ENCODE measurements at regions of chr22 and their contacts with region 1.

Region 1: GRCh38 chr22:41697126-41697775 is 2.1 kb upstream of the MEI1 start:
- H3K4me3 ChIP-seq: no peak overlapping the region
- H3K27ac ChIP-seq: no peak overlapping the region
- H3K4me1 ChIP-seq: no peaks in the 10 kb centered on the region
- CTCF ChIP-seq: peak; percentile 94

Region 2: GRCh38 chr22:41589391-41590241 is 107.6 kb before region 1 on chr22 and contains the start of gene PMM1:
- CTCF ChIA-PET with region 1: no interaction called
- POLR2A ChIA-PET with region 1: no interaction called
- H3K4me3 ChIP-seq: peak within 1 kb of the TSS; percentile 90
- H3K27ac ChIP-seq: peak within 1 kb of the TSS; percentile 61
- H3K4me1 ChIP-seq: peaks cover 12% of the 10 kb centered on the region
- CTCF ChIP-seq: peak; percentile 81; the same call in 1 of the 2 replicates

Region 3: DNA sequence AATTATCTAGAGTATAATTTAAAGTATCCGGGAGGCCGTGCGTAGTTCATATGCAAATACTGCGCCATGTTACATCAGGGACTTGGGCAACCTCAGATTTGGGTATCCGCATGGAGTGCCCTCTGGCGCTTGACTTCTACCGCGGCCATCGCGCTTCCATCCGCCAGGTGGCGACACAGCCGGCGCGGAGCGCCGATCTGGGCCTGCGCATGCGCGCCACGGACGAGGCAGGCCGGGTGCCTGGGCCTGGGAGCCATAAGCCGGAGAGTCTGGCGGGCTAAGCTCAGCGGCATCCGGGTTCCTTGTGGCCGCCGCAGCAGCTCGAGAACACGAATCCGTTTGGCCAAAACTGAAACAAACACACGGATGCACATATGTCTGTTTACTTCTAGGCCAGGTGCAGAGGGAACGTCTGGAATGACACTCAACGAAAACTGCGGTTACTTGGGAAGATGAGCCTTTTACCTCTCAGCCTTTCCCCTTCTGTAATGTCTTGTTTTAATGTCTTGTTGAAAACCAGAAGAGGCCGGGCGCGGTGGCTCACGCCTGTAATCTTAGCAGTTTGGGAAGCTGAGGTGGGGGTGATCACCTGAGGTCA is 30.5 kb before region 1 on chr22:
- CTCF ChIA-PET with region 1: interaction called, 12 read pairs
- POLR2A ChIA-PET with region 1: interaction called, 5 read pairs
- H3K4me3 ChIP-seq: peak overlapping the region; percentile 42
- H3K27ac ChIP-seq: peak overlapping the region; percentile 99
- H3K4me1 ChIP-seq: no peaks in the 10 kb centered on the region
- CTCF ChIP-seq: peak; percentile 100

Region 4: GRCh38 chr22:41732096-41732772 is 35.0 kb after region 1 on chr22:
- CTCF ChIA-PET with region 1: interaction called, 18 read pairs
- POLR2A ChIA-PET with region 1: no interaction called
- H3K4me3 ChIP-seq: no peak overlapping the region
- H3K27ac ChIP-seq: no peak overlapping the region
- H3K4me1 ChIP-seq: no peaks in the 10 kb centered on the region; the same call in 1 of the 2 replicates
- CTCF ChIP-seq: no peak

Region 5: GRCh38 chr22:41768430-41768829 is 71.2 kb after region 1 on chr22:
- CTCF ChIA-PET with region 1: interaction called, 22 read pairs
- POLR2A ChIA-PET with region 1: interaction called, 3 read pairs
- H3K4me3 ChIP-seq: no peak overlapping the region
- H3K27ac ChIP-seq: no peak overlapping the region
- H3K4me1 ChIP-seq: no peaks in the 10 kb centered on the region
- CTCF ChIP-seq: no peak

Region 6: GRCh38 chr22:41822317-41823060 is 125.2 kb after region 1 on chr22:
- CTCF ChIA-PET with region 1: interaction called, 11 read pairs
- POLR2A ChIA-PET with region 1: no interaction called
- H3K4me3 ChIP-seq: no peak overlapping the region
- H3K27ac ChIP-seq: no peak overlapping the region
- H3K4me1 ChIP-seq: no peaks in the 10 kb centered on the region
- CTCF ChIP-seq: peak; percentile 55; the same call in 1 of the 2 replicates

Region 7: DNA sequence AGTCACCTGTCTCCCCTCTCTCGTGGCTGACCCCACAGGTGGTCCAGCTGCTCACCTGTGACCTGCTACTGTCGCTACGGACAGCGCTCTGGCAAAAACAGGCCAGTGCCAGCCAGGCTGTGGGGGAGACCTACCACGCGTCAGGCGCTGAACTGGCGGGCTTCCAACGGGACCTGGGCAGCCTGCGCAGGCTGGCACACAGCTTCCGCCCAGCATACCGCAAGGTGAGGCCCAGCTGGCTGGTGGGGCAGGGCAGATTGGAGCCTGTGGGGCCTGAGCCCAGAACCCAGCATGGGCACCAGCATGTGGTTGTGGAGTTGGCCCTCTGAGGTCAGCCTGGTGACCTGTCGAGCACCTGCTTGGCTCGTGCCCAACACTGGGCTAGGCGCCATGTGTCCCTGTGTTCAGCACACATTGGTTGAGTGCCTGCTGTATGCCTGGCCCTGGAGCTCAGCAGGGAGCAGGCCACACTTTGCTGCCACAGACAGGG is 205.7 kb after region 1 on chr22:
- CTCF ChIA-PET with region 1: interaction called, 13 read pairs
- POLR2A ChIA-PET with region 1: no interaction called
- H3K4me3 ChIP-seq: no peak overlapping the region
- H3K27ac ChIP-seq: no peak overlapping the region
- H3K4me1 ChIP-seq: no peaks in the 10 kb centered on the region
- CTCF ChIP-seq: no peak

Region 8: DNA sequence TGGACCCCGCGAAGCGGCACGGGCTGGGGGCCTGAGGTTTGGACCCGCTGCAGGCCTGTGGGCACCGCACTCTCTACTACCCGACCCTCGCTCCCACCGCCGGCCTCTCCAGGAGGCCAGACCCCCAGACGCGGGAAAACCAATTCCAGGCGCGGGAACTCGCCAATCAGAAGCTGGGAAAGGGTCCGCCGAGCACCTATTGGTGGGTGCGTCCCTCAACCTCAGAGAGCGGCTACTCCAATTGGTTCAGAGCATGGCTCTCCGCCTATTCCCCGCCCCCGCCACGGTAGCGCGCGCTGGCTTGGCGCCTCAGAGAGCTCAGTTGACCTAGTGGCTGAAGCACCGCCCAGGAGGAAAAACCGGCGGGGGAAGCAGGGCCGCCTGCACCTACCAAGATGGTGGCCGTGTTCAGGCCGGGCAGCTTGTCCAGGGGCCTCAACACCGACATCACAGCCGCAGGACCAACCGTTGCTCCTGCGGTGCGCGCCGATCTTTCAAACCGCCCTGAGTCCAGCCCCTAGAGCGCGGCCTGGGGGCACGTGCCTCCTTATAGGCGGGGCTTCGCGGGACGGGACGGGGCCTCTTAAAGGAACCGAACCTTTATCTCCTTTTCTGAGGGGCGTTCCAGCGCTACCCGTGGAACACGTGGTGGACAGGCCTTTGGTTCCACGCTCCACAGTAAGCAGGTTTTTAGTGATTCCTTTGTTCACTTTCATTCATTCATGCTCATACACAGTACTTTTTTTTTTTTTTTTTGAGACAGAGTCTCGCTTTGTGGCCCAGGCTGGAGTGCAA is 249.6 kb after region 1 on chr22 and contains the start of gene CENPM:
- CTCF ChIA-PET with region 1: interaction called, 53 read pairs
- POLR2A ChIA-PET with region 1: interaction called, 15 read pairs
- H3K4me3 ChIP-seq: peak within 1 kb of the TSS; percentile 68
- H3K27ac ChIP-seq: peak within 1 kb of the TSS; percentile 90
- H3K4me1 ChIP-seq: no peaks in the 10 kb centered on the region
- CTCF ChIP-seq: peak; percentile 2; the same call in 1 of the 2 replicates

Measured in HEK293 (cell line).